ENCODE measurements at regions of chr15 and their contacts with region 1.

Region 1: GRCh38 chr15:41557673-41558399 is 1.2 kb upstream of the TYRO3 start:
- DNase-seq: no peak
- ATAC-seq: peak; percentile 76
- H3K4me3 ChIP-seq: peak overlapping the region; percentile 59 to 77
- H3K27ac ChIP-seq: peak overlapping the region; percentile 75
- H3K4me1 ChIP-seq: peaks cover 16% of the 10 kb centered on the region
- H3K27me3 ChIP-seq: no peaks in the 10 kb centered on the region
- CTCF ChIP-seq: peak; percentile 99

Region 2: GRCh38 chr15:41599061-41599460 is 41.2 kb after region 1 on chr15:
- CTCF ChIA-PET with region 1: interaction called, 14 read pairs
- POLR2A ChIA-PET with region 1: no interaction called
- in situ Hi-C with region 1: no loop called
- intact Hi-C with region 1: no loop called
- DNase-seq: no peak
- ATAC-seq: no peak
- H3K4me3 ChIP-seq: no peak overlapping the region
- H3K27ac ChIP-seq: no peak overlapping the region
- H3K4me1 ChIP-seq: peaks cover 8% of the 10 kb centered on the region; the same call in 1 of the 2 replicates
- H3K27me3 ChIP-seq: no peaks in the 10 kb centered on the region
- CTCF ChIP-seq: no peak

Region 3: DNA sequence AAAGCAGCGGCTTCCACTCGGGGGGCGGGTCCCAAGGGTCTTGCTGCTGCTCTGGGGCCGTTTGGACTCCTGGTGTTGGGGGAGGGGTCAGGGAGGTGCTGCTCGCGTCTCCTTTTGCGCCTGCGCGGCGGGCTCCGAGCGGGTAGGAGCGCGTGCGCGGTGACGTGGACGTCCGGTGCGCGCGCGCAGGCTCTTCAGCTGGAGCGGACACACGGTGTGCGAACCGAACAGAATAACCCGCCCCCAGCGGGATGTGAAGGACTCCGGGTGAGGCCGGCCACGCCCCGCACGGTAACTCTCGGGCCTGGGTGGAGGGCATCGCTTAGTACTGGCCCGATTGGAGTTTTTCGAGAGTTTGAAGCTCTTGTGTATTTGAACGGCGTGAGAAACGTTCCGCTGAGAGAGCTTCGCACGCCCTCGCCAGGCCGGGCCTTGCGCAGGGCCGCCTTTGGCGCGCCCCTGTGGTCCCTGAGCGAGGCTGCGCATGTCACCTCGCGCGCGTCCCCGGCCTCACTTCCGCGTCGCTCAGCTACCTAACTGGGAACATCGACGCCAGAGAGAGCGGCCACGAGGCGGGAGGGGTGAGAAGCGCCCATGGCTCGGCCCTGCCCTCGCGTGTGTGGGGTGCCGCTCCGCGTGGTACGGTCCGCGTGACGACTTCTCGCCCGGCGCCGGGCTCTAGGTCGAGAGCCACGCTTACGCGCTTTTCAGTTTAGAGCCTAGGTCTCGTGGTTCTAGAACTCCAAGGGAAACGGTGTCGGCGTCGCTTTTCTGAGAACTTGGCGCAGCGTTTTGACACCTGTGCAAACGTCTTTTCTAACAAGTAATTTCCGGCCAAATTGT is 102.6 kb after region 1 on chr15 and contains the start of gene MGA:
- CTCF ChIA-PET with region 1: no interaction called
- POLR2A ChIA-PET with region 1: no interaction called
- in situ Hi-C with region 1: no loop called
- intact Hi-C with region 1: no loop called
- DNase-seq: no peak
- ATAC-seq: no peak
- H3K4me3 ChIP-seq: peak within 1 kb of the TSS; percentile 45 to 71
- H3K27ac ChIP-seq: peak within 1 kb of the TSS; percentile 99
- H3K4me1 ChIP-seq: peaks cover 62% of the 10 kb centered on the region
- H3K27me3 ChIP-seq: no peaks in the 10 kb centered on the region
- CTCF ChIP-seq: no peak
- total RNA-seq, gene MGA: 43.6 TPM

Region 4: GRCh38 chr15:41727143-41727542 is 169.3 kb after region 1 on chr15:
- CTCF ChIA-PET with region 1: interaction called, 8 read pairs
- POLR2A ChIA-PET with region 1: interaction called, 10 read pairs
- in situ Hi-C with region 1: no loop called
- intact Hi-C with region 1: no loop called
- DNase-seq: no peak
- ATAC-seq: no peak
- H3K4me3 ChIP-seq: no peak overlapping the region
- H3K27ac ChIP-seq: no peak overlapping the region
- H3K4me1 ChIP-seq: no peaks in the 10 kb centered on the region
- H3K27me3 ChIP-seq: no peaks in the 10 kb centered on the region
- CTCF ChIP-seq: no peak

Region 5: GRCh38 chr15:42198516-42198915 is 640.7 kb after region 1 on chr15:
- CTCF ChIA-PET with region 1: no interaction called
- POLR2A ChIA-PET with region 1: interaction called, 10 read pairs
- in situ Hi-C with region 1: no loop called
- intact Hi-C with region 1: no loop called
- DNase-seq: no peak
- ATAC-seq: no peak
- H3K4me3 ChIP-seq: no peak overlapping the region
- H3K27ac ChIP-seq: no peak overlapping the region
- H3K4me1 ChIP-seq: no peaks in the 10 kb centered on the region
- H3K27me3 ChIP-seq: no peaks in the 10 kb centered on the region
- CTCF ChIP-seq: no peak

Measured in Panc1 (cell line).